ENCODE measurements at regions of chr4 and their contacts with region 1.

Region 1: DNA sequence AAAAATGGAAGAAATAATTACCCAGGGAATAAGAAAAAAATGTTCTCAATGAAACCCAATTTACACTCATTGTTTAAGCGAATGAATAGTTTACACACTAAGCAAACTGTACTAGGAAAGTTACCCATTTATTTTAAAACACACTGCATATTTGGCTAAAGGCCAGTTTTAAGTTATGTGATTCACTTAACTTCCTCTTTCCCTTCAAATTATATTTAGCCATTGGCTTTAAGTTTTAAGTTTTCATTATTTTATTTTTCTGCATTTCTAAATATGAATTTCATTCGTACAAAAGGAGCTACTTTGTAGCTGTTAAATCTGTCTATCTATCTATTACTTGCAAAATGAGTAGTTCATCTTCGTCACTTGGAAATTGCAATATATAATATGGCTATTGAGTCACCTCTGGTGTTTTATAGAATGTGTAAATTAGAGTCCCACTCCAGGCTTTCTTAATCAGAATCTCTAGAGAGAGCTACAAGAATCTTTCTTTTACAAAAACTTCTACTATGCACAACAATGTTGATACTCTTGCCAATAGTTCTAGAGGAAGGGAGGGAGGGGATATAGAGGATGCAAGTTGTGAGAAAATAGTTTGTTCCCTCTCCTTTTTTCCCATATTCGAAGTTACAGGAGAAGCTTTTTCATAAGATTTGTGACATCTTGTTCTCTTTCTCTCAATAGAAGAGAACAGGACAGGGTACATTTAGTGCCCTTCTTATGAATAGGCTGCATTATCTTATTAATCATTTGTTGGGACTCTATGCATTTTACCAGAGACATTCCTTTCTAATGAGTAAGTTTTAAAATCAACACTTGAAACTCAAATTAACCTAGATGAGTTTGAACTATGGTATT is 41.8 kb downstream of the SULT1B1 start:
- DNase-seq: no peak
- ATAC-seq: no peak
- H3K4me3 ChIP-seq: no peak overlapping the region
- H3K4me3 Mint-ChIP-seq: no peak overlapping the region
- H3K27ac ChIP-seq: no peak overlapping the region
- H3K27ac Mint-ChIP-seq: peak overlapping the region in 3 of 9 donors; percentile 4 to 43 (median 21)
- H3K4me1 ChIP-seq: no peaks in the 10 kb centered on the region
- H3K4me1 Mint-ChIP-seq: peaks cover 0 to 12% (median 8%) of the 10 kb centered on the region in 7 donors
- H3K27me3 ChIP-seq: no peaks in the 10 kb centered on the region
- H3K27me3 Mint-ChIP-seq: no peaks in the 10 kb centered on the region

Region 2: DNA sequence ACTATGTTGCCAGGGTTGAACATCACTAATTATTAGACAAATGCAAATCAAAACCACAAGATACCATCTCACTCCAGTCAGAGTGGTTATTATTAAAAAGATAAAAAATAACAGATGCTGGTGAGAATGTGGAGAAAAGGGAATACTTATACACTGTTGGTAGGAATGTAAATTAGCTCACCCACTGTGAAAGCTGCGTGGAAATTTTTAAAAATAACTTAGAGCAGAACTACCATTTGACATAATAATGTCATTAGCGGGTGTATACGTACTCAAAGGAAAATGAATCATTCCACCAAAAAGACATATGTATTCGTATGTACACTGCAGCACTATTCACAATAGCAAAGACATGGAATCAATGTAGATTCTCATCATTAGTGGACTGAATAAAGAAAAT is 16.9 kb before region 1 on chr4:
- CTCF ChIA-PET with region 1: no interaction called
- POLR2A ChIA-PET with region 1: no interaction called
- intact Hi-C with region 1: loop called in 1 of 2 experiments (anchors 1 kb)
- DNase-seq: no peak
- ATAC-seq: no peak
- H3K4me3 ChIP-seq: no peak overlapping the region
- H3K4me3 Mint-ChIP-seq: no peak overlapping the region
- H3K27ac ChIP-seq: no peak overlapping the region
- H3K27ac Mint-ChIP-seq: no peak overlapping the region
- H3K4me1 ChIP-seq: no peaks in the 10 kb centered on the region
- H3K4me1 Mint-ChIP-seq: peaks cover 0 to 1% (median 0%) of the 10 kb centered on the region in 7 donors
- H3K27me3 ChIP-seq: no peaks in the 10 kb centered on the region
- H3K27me3 Mint-ChIP-seq: no peaks in the 10 kb centered on the region

Region 3: DNA sequence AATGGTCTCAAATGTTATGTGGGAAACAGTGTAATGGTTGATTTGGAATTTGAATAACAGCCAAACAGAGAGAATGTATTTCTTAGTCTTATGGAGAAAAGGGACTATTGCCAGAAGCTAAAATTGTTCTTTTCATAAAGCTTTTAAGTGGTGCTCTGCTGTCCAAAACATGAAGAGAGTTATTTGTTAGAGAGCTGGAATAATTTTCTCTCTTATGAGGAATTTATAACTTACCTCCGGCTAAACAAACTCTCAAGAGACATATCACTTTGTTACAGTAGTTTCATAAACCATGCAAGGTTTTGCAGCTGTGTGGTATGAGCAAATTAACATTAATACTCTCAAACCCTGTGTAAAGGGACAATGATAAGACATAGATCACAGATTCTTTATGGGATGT is 13.2 kb after region 1 on chr4:
- CTCF ChIA-PET with region 1: no interaction called
- POLR2A ChIA-PET with region 1: no interaction called
- intact Hi-C with region 1: loop called in 1 of 2 experiments (anchors 1 kb)
- DNase-seq: no peak
- ATAC-seq: no peak
- H3K4me3 ChIP-seq: no peak overlapping the region
- H3K4me3 Mint-ChIP-seq: no peak overlapping the region
- H3K27ac ChIP-seq: no peak overlapping the region
- H3K27ac Mint-ChIP-seq: peak overlapping the region in 1 of 9 donors; percentile 45
- H3K4me1 ChIP-seq: no peaks in the 10 kb centered on the region
- H3K4me1 Mint-ChIP-seq: peaks cover 0 to 40% (median 13%) of the 10 kb centered on the region in 7 donors
- H3K27me3 ChIP-seq: no peaks in the 10 kb centered on the region
- H3K27me3 Mint-ChIP-seq: no peaks in the 10 kb centered on the region

Region 4: GRCh38 chr4:69977567-69977966 is 258.9 kb after region 1 on chr4:
- CTCF ChIA-PET with region 1: no interaction called
- POLR2A ChIA-PET with region 1: no interaction called
- intact Hi-C with region 1: no loop called
- DNase-seq: no peak
- ATAC-seq: no peak
- H3K4me3 ChIP-seq: no peak overlapping the region
- H3K4me3 Mint-ChIP-seq: no peak overlapping the region
- H3K27ac ChIP-seq: no peak overlapping the region
- H3K27ac Mint-ChIP-seq: no peak overlapping the region
- H3K4me1 ChIP-seq: no peaks in the 10 kb centered on the region
- H3K4me1 Mint-ChIP-seq: no peaks in the 10 kb centered on the region
- H3K27me3 ChIP-seq: no peaks in the 10 kb centered on the region
- H3K27me3 Mint-ChIP-seq: peaks cover 0 to 12% (median 6%) of the 10 kb centered on the region in 5 donors